GM12878 (cell line): ENCODE measurements at regions of chr15 and their contacts with region 1.

Region 1: DNA sequence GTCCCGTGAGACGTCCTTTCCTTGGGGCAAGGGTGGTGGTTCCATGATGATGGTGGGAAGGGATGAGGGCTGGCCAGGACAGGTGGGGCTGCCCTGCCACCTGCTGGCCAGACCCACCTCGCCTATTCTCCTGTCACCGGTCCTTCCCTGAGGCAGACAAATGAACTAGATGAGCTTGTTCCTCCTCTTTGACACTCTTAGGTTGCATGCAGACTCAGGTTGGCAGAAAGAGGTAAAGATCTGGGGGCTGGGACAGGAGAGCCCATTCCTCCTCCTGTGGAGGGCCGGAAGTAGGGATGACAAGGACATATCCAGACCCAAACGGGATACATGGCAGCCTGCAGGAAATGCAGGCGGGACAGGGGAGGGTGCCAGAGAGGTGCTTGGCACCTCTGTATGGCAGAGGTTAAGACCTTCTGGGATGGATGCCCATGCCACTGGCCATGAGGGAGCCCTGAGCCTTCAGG is 38.6 kb downstream of the ACSBG1 start:
- DNase-seq: no peak
- ATAC-seq: peak; percentile 99
- H3K4me3 ChIP-seq: no peak overlapping the region
- H3K27ac ChIP-seq: no peak overlapping the region
- H3K4me1 ChIP-seq: no peaks in the 10 kb centered on the region
- H3K27me3 ChIP-seq: peaks cover 0 to 2% of the 10 kb centered on the region in 2 experiments; a peak in 2 of 4 replicates
- CTCF ChIP-seq: peak; percentile 89 to 98 (median 93); a peak in 5 of 6 replicates
- EP300 ChIP-seq: no peak
- POLR2A ChIP-seq: no peak
- RAD21 ChIP-seq: peak; percentile 85

Region 2: GRCh38 chr15:78018946-78019644 is 176.7 kb before region 1 on chr15:
- CTCF ChIA-PET with region 1: interaction called, 10 read pairs
- POLR2A ChIA-PET with region 1: no interaction called
- RAD21 ChIA-PET with region 1: no interaction called
- SMC1A ChIA-PET with region 1: no interaction called
- in situ Hi-C with region 1: no loop called
- intact Hi-C with region 1: no loop called
- DNase-seq: no peak
- ATAC-seq: peak; percentile 97
- H3K4me3 ChIP-seq: no peak overlapping the region
- H3K27ac ChIP-seq: peak overlapping the region; percentile 60
- H3K4me1 ChIP-seq: peaks cover 7% of the 10 kb centered on the region
- H3K27me3 ChIP-seq: no peaks in the 10 kb centered on the region
- CTCF ChIP-seq: no peak
- EP300 ChIP-seq: no peak
- POLR2A ChIP-seq: no peak
- RAD21 ChIP-seq: no peak

Region 3: GRCh38 chr15:78140292-78140691 is 55.5 kb before region 1 on chr15:
- CTCF ChIA-PET with region 1: interaction called, 70 read pairs
- POLR2A ChIA-PET with region 1: no interaction called
- RAD21 ChIA-PET with region 1: interaction called, 147 read pairs
- SMC1A ChIA-PET with region 1: interaction called, 18 read pairs
- in situ Hi-C with region 1: no loop called
- intact Hi-C with region 1: no loop called
- DNase-seq: no peak
- ATAC-seq: no peak
- H3K4me3 ChIP-seq: no peak overlapping the region
- H3K27ac ChIP-seq: no peak overlapping the region
- H3K4me1 ChIP-seq: no peaks in the 10 kb centered on the region
- H3K27me3 ChIP-seq: no peaks in the 10 kb centered on the region
- CTCF ChIP-seq: no peak
- EP300 ChIP-seq: no peak
- POLR2A ChIP-seq: no peak
- RAD21 ChIP-seq: no peak

Region 4: DNA sequence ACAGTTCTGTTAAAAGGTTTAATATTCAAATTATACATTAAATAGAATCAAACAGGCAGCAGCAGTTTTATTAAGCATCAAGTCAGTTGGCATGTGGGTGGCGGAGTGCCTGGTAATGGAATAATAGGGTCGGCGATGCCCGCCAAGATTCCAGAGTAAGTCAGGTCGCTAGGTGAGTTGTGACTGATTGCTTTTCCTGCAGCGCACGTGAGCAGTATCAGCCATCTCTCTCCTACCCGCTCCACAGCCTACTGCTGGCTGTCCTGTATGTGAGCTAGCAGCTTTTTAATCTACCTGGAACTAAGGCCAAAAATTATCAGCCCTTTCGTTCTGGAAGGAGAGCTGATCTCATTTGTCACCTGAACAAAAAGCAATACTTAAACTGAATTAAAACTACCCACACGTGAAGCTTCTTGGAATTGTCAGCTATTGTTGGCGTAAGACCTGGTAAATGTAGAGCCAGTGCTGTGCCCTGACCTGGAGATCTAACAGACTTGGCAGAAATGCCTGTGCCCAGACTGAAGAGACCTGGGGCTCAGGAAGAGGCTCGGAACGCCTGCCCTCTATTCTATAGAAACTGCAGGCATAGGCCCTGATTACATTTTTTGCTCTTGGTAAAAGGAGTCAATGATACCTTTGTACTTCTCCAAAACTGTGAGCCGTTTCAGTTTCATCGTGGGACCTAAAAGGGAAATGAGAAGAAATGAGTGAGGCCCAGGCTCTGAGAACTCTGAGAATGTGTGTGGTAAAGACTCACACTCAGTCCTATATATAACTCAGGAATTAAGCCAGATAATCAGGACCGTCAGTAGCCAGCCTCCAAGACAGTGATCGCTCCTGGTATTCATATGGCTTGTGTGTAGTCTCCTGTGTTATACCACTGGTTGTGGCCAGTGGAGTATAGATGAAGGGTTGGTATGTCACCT is 24.7 kb before region 1 on chr15:
- CTCF ChIA-PET with region 1: interaction called, 108 read pairs
- POLR2A ChIA-PET with region 1: no interaction called
- RAD21 ChIA-PET with region 1: interaction called, 31 read pairs
- SMC1A ChIA-PET with region 1: interaction called, 38 read pairs
- in situ Hi-C with region 1: no loop called
- intact Hi-C with region 1: no loop called
- DNase-seq: peak; percentile 85
- ATAC-seq: peak; percentile 81
- H3K4me3 ChIP-seq: no peak overlapping the region; the same call in 1 of the 2 replicates
- H3K27ac ChIP-seq: peak overlapping the region; percentile 88
- H3K4me1 ChIP-seq: peaks cover 79% of the 10 kb centered on the region
- H3K27me3 ChIP-seq: no peaks in the 10 kb centered on the region
- CTCF ChIP-seq: no peak
- EP300 ChIP-seq: peak; percentile 36 to 70; a peak in 2 of 4 replicates
- POLR2A ChIP-seq: no peak
- RAD21 ChIP-seq: no peak

Region 5: GRCh38 chr15:78225783-78226541 is 30.2 kb after region 1 on chr15:
- CTCF ChIA-PET with region 1: interaction called, 16 read pairs
- POLR2A ChIA-PET with region 1: no interaction called
- RAD21 ChIA-PET with region 1: interaction called, 7 read pairs
- SMC1A ChIA-PET with region 1: interaction called, 6 read pairs
- in situ Hi-C with region 1: no loop called
- intact Hi-C with region 1: no loop called
- DNase-seq: peak; percentile 49
- ATAC-seq: peak; percentile 94
- H3K4me3 ChIP-seq: no peak overlapping the region
- H3K27ac ChIP-seq: peak overlapping the region; percentile 58
- H3K4me1 ChIP-seq: peaks cover 3% of the 10 kb centered on the region; the same call in 1 of the 2 replicates
- H3K27me3 ChIP-seq: no peaks in the 10 kb centered on the region
- CTCF ChIP-seq: no peak
- EP300 ChIP-seq: no peak
- POLR2A ChIP-seq: no peak
- RAD21 ChIP-seq: no peak

Region 6: DNA sequence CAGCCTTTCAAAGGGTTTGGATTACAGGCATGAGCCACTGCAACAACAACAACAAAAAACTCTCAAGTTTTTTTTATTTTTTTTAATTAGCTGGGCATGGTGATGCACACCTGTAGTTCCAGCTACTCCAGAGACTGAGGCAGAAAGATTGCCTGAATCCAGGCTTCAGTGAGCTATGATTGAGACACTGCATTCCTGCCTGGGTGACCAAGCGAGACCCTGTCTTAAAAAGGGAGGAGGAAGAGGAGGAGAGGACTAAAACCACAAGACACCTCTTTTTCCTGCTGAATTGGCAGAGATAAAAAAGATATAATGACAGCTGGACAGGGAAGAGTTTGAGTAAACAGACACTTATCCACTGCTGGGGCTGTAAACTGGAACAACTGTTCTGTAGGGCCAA is 467.9 kb after region 1 on chr15:
- CTCF ChIA-PET with region 1: no interaction called
- POLR2A ChIA-PET with region 1: no interaction called
- RAD21 ChIA-PET with region 1: no interaction called
- SMC1A ChIA-PET with region 1: no interaction called
- in situ Hi-C with region 1: no loop called
- intact Hi-C with region 1: no loop called
- DNase-seq: no peak
- ATAC-seq: no peak
- H3K4me3 ChIP-seq: no peak overlapping the region
- H3K27ac ChIP-seq: no peak overlapping the region
- H3K4me1 ChIP-seq: 0 out of 2 replicates have a peak, but pooled peaks cover 3% of the 10 kb centered on the region
- H3K27me3 ChIP-seq: no peaks in the 10 kb centered on the region
- CTCF ChIP-seq: no peak
- EP300 ChIP-seq: no peak
- POLR2A ChIP-seq: no peak
- RAD21 ChIP-seq: no peak